ENCODE measurements at regions of chr4 and their contacts with region 1.

Region 1: GRCh38 chr4:107183155-107183774 is 147.2 kb upstream of the DKK2 start:
- DNase-seq: peak; percentile 21
- H3K4me3 ChIP-seq: no peak overlapping the region
- H3K27ac ChIP-seq: no peak overlapping the region
- H3K27me3 ChIP-seq: no peaks in the 10 kb centered on the region
- CTCF ChIP-seq: peak; percentile 77

Region 2: DNA sequence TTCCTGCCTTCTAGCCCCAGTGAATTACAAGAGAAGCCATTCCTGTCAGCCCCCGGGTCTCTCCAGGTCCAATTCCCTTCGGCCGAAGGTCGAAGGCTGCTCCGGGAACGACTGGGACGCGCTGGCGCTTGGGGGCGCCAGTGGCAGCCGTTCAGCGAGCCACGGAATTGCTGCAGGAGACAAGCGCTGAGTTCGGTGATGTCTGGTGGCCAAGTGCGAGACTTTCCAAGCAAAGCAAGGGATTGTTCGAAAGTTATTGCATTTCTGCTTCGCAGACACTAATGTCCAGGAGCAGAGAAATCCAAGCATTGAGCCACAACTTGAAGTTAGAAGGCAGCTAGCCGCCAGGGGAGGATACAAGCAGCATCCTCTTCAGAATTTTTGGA is 146.1 kb before region 1 on chr4:
- CTCF ChIA-PET with region 1: interaction called, 12 read pairs
- POLR2A ChIA-PET with region 1: no interaction called
- DNase-seq: no peak
- H3K4me3 ChIP-seq: peak overlapping the region; percentile 50; the same call in 1 of the 2 replicates
- H3K27ac ChIP-seq: no peak overlapping the region
- H3K27me3 ChIP-seq: peaks cover 41% of the 10 kb centered on the region
- CTCF ChIP-seq: peak; percentile 48

Region 3: DNA sequence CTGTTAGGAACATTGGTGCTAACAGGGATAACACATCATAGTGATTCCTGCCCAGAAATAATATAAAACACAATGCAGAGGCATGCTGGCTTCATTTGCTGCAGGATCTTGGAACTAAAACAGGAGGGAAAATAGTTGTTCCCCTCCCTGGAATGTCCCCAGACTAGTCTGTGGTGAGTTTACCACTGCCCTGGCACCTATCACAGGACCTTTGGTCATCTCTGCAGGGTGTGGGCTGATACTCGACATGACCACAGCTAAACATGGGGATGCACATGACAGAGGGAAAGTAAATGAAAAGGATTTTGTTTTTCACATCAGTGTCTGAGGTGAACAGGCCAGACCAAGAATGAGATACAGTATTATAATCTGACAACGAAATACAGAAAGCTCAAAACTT is 13.0 kb after region 1 on chr4:
- CTCF ChIA-PET with region 1: interaction called, 21 read pairs
- POLR2A ChIA-PET with region 1: no interaction called
- DNase-seq: no peak
- H3K4me3 ChIP-seq: no peak overlapping the region
- H3K27ac ChIP-seq: no peak overlapping the region
- H3K27me3 ChIP-seq: no peaks in the 10 kb centered on the region
- CTCF ChIP-seq: no peak

Region 4: DNA sequence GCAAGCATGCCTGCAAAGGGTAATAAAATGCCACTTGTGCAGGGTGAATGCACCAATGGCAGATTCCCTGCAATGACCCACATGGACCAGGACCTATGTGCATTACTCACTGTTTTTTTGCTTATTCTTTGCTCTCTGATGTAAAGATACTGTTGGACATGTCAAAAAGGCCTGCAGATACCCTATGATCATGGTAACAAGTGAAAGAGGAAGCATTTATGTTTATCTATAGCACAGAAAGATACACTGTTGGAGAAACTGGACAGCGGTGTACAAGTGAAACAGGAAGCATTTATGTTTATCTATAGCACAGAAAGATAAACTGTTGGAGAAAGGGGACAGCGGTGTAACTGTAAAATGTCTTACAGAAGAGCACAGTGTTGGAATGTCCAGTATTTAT is 409.3 kb after region 1 on chr4:
- CTCF ChIA-PET with region 1: no interaction called
- POLR2A ChIA-PET with region 1: no interaction called
- DNase-seq: no peak
- H3K4me3 ChIP-seq: no peak overlapping the region
- H3K27ac ChIP-seq: no peak overlapping the region
- H3K27me3 ChIP-seq: no peaks in the 10 kb centered on the region
- CTCF ChIP-seq: no peak